ENCODE measurements at regions of chr5 and their contacts with region 1.

Region 1: DNA sequence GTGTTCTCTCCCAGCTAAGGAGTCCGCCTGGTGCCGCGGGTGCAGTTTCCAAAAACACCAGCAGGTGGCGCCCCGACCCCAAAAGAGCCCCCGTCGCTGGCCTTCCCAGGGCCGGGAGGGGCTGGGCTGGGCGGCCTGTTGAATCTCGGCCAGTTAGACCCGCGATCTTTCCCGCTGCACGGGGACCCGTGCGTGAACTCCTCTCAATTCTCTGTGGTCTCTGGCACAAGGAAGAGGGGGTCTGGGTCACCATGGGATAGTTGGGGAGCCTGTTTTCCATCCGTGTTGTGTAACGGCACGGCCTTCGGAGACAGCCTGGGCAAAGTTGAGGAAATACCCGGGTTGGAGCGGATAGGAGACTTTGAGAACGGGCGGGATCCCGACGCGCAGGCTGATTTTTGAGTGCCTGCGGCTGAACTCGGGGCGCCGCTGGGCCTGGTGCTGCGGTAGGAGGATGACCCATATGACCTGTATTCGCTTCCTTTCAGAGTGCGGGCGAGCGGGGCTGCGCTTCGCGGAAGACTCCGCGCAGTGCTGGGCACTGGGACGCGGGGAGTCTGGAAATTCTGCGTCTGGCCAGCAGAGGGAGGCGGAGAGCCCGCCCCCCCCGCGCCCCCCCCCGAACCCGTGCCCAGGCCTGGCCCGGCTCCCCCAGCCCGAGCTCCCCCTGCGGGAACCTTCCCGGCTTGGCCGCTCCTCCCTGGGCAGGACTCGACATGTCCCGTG is 7.9 kb upstream of the PSD2 start:
- DNase-seq: peak; percentile 86 to 96 (median 96)
- ATAC-seq: peak; percentile 96
- H3K4me3 ChIP-seq: peak overlapping the region; percentile 35
- H3K27ac ChIP-seq: no peak overlapping the region
- H3K4me1 ChIP-seq: peaks cover 0 to 21% of the 10 kb centered on the region in 2 experiments; a peak in 2 of 5 replicates
- H3K27me3 ChIP-seq: peaks cover 16 to 40% of the 10 kb centered on the region in 2 experiments
- CTCF ChIP-seq: peak; percentile 91 to 97 (median 96)
- EP300 ChIP-seq: no peak
- POLR2A ChIP-seq: no peak
- RAD21 ChIP-seq: peak; percentile 96 to 97

Region 2: DNA sequence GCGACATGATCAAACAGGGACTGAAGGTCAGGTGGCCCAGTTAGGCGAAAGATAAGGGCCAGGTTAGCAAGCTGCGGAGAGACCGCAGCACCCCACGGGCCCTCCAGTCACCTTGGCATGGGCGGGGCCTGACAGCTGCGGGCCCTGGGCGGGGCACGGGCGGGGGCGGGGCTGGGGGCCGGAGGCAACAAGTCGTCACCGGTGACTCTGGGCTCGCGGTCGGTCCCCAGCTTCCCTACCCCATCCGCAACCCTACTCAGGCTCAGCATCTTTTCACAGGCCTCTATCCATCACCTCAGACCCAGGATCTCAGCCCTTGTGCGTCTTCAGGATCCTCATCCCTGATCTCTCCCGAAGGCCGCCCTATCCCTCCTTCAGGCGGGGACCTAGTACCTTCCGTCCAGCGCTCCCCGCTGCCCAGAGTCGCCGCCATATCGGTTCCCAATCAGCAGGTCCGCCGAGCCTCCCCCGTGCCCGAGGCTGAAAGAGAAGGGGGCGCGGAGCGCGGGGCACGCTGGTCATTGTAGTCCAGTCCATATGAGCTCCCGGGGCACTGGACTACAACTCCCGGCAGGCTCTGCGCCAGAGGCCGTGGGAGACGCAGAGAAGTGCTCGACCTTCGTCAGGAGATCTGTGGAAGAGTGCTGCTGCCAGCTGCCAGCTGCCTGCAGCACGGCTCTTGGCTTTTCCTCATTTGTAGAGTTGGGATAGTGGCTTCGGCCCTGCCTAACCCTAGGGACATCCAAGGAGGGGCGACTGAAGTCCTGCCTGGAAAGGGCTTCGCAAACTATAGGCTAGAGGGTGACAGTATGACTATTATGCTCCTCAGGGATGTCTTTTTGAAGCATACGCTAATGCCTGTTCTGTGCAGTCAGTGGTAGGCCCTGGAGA is 348.5 kb before region 1 on chr5 and contains the start of gene DNAJC18:
- CTCF ChIA-PET with region 1: no interaction called
- POLR2A ChIA-PET with region 1: no interaction called
- in situ Hi-C with region 1: no loop called
- intact Hi-C with region 1: no loop called
- DNase-seq: peak; percentile 94 to 97 (median 95)
- ATAC-seq: peak; percentile 97
- H3K4me3 ChIP-seq: peak within 1 kb of the TSS; percentile 80
- H3K27ac ChIP-seq: peak within 1 kb of the TSS; percentile 91
- H3K4me1 ChIP-seq: peaks cover 11 to 17% of the 10 kb centered on the region in 2 experiments
- H3K27me3 ChIP-seq: no peaks in the 10 kb centered on the region
- CTCF ChIP-seq: no peak
- EP300 ChIP-seq: no peak
- POLR2A ChIP-seq: peak; percentile 64
- RAD21 ChIP-seq: no peak
- polyA plus RNA-seq, gene DNAJC18: 7.7 to 13.3 TPM

Region 3: DNA sequence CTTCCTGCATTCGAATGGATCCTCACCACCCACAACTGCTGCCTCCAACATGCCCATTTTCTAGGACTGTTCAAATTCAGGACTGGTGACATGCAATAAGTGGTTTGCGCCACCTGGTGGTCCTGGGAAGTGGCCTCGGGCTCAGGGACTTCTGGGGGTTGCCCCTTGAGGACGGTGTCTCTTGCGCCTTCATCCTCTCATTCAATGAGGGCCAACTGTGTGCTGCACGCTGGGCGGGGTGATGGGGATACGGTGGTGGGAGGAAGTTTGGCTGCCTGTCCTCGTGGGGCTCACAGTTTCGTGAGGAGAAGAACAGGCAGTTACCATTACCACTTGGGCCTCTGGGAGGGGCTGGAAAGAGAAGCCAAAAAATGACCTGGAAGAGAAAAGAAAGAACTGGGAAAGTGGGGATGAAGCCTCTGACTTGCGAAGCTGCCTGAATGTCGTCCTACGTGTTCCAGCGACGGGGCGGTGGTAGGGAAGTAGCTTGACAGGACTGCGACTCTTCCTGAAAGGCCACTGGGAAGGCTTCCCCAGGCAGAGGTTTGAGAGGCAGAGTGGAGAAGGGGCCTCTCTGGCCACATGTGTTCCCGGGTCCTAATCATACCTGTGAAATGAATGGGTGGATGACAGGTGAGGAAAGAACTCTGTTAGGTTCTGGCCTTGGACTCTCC is 56.9 kb after region 1 on chr5:
- CTCF ChIA-PET with region 1: interaction called, 20 read pairs
- POLR2A ChIA-PET with region 1: interaction called, 6 read pairs
- in situ Hi-C with region 1: loop called (anchors 5 kb)
- intact Hi-C with region 1: loop called (anchors 1 kb)
- DNase-seq: peak; percentile 78 to 86 (median 78)
- ATAC-seq: peak; percentile 94
- H3K4me3 ChIP-seq: no peak overlapping the region
- H3K27ac ChIP-seq: no peak overlapping the region
- H3K4me1 ChIP-seq: peaks cover 0 to 9% of the 10 kb centered on the region in 2 experiments; a peak in 2 of 5 replicates
- H3K27me3 ChIP-seq: peaks cover 32 to 60% of the 10 kb centered on the region in 2 experiments
- CTCF ChIP-seq: peak; percentile 89 to 95 (median 91)
- EP300 ChIP-seq: no peak
- POLR2A ChIP-seq: no peak
- RAD21 ChIP-seq: peak; percentile 65 to 75

Region 4: DNA sequence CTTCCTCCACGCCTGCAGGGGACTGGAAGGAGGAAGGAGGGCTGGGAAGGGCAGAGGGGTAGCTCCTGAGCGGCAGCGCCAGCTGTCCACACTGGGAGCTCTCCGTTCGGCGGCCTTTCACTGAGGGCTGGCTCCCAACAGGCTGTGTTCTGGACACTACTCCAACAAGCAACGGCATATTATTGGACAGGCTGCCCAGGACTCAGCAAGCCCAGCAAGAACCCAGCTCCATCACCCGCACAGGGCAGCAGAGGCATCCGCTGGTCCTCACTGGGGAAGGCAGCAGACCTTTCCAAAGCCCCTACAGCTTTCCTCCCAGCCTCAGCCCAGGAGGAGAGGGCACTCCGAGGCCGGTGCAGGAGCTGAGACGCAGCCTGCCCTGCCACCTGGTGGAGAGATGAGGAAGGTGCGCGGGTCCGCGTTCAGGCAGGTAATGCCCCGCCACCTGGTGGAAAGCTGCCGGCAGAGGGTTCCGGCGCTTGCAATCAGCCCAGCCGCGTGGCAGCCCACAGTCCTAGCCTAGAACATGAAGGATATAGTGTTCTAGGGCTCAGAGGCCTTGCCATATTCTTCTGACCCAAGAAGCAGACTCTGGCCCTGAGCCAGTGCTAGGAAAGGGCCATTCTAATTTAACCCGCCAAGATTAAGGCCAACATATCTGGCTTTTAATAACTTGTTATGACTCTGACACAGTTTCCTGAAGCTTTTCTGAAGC is 181.0 kb after region 1 on chr5:
- CTCF ChIA-PET with region 1: interaction called, 117 read pairs
- POLR2A ChIA-PET with region 1: interaction called, 4 read pairs
- in situ Hi-C with region 1: loop called (anchors 5 kb)
- intact Hi-C with region 1: loop called (anchors 1 kb)
- DNase-seq: peak; percentile 88 to 91 (median 90)
- ATAC-seq: peak; percentile 100
- H3K4me3 ChIP-seq: no peak overlapping the region
- H3K27ac ChIP-seq: no peak overlapping the region
- H3K4me1 ChIP-seq: peaks cover 0 to 10% of the 10 kb centered on the region in 2 experiments; a peak in 1 of 5 replicates
- H3K27me3 ChIP-seq: peaks cover 0 to 30% of the 10 kb centered on the region in 2 experiments; a peak in 4 of 5 replicates
- CTCF ChIP-seq: peak; percentile 100
- EP300 ChIP-seq: no peak
- POLR2A ChIP-seq: no peak
- RAD21 ChIP-seq: peak; percentile 97 to 99

Region 5: GRCh38 chr5:140094889-140095288 is 307.2 kb after region 1 on chr5:
- CTCF ChIA-PET with region 1: no interaction called
- POLR2A ChIA-PET with region 1: no interaction called
- in situ Hi-C with region 1: no loop called
- intact Hi-C with region 1: no loop called
- DNase-seq: no peak
- ATAC-seq: no peak
- H3K4me3 ChIP-seq: no peak overlapping the region
- H3K27ac ChIP-seq: no peak overlapping the region
- H3K4me1 ChIP-seq: no peaks in the 10 kb centered on the region
- H3K27me3 ChIP-seq: no peaks in the 10 kb centered on the region; a peak in 1 of 5 replicates
- CTCF ChIP-seq: no peak
- EP300 ChIP-seq: no peak
- POLR2A ChIP-seq: no peak
- RAD21 ChIP-seq: no peak

Region 6: DNA sequence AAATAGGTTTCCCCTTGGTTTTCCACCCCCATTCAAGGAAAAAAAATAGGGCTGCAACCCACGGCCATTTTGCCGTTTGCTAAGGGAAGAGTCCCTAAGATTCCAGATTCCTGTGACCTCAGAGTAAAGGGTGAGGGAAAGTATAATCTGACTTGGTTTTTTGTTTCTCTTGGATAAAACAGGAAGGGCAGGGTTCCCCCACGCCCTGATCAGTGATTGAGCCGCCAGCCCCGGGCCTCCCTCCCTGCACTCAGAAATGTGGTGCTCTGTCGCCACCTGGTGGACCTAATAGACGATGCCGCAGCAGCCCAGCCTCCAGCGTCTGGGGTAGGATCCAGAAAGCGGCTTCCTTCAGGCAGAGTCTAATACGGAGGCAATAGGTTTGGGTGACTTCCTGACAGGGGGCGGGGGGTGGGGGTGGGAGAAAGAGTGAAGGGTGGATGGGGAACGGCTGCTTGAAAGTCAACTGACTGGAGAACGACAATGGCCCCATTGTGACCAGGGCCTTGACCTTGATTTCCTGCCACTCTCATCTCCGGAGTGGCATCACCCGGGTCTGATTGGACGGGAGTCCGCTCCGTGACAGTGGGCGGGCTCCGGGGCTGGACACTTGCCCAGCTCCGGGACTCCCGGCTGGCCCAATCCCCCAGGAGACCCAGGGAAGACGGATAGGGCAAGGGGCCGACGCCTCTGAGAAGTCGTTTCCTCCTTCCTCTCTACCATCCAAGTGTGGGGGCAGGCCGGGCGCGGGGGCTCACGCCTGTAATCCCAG is 369.5 kb after region 1 on chr5:
- CTCF ChIA-PET with region 1: interaction called, 3 read pairs
- POLR2A ChIA-PET with region 1: no interaction called
- in situ Hi-C with region 1: loop called (anchors 5 kb)
- intact Hi-C with region 1: loop called (anchors 2 kb)
- DNase-seq: peak; percentile 90
- ATAC-seq: peak; percentile 97
- H3K4me3 ChIP-seq: no peak overlapping the region
- H3K27ac ChIP-seq: no peak overlapping the region
- H3K4me1 ChIP-seq: peaks cover 0 to 10% of the 10 kb centered on the region in 2 experiments; a peak in 2 of 5 replicates
- H3K27me3 ChIP-seq: peaks cover 0 to 4% of the 10 kb centered on the region in 2 experiments; a peak in 1 of 5 replicates
- CTCF ChIP-seq: peak; percentile 88 to 95 (median 94)
- EP300 ChIP-seq: no peak
- POLR2A ChIP-seq: no peak
- RAD21 ChIP-seq: peak; percentile 93 to 96